Esophagus squamous epithelium (tissue), 5 donors: ENCODE measurements at regions of chr7 and their contacts with region 1.

Region 1: GRCh38 chr7:64183126-64183742 is 23.8 kb upstream of the ZNF735 start:
- DNase-seq: no peak
- H3K4me3 ChIP-seq: no peak overlapping the region
- H3K27ac ChIP-seq: no peak overlapping the region
- H3K4me1 ChIP-seq: no peaks in the 10 kb centered on the region
- H3K27me3 ChIP-seq: peaks cover 0 to 20% (median 0%) of the 10 kb centered on the region in 4 donors
- CTCF ChIP-seq: peak; percentile 33 to 73 (median 52)
- POLR2A ChIP-seq: no peak

Region 2: DNA sequence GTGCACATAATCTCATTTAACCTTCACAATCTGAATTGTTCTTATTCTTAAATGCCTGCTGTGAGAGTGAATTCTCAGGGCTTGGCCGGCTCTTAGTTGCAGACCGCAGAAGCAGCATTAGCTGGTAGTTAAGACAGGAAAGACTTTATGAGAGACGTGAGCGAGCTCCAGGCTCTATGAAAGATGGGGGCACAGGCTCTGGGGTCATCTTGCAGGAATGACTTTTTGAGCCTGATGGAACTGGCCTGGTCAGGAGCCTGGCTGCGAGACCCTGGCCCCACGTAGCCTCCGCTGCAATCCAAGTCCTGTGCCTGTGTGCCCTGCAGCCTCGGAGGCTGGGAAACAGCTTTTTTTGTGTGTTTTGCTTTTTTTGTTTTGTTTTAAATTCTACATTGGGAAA is 1143.4 kb before region 1 on chr7:
- intact Hi-C with region 1: no loop called
- DNase-seq: no peak
- H3K4me3 ChIP-seq: no peak overlapping the region
- H3K27ac ChIP-seq: no peak overlapping the region
- H3K4me1 ChIP-seq: no peaks in the 10 kb centered on the region
- H3K27me3 ChIP-seq: no peaks in the 10 kb centered on the region
- CTCF ChIP-seq: no peak
- POLR2A ChIP-seq: no peak

Region 3: DNA sequence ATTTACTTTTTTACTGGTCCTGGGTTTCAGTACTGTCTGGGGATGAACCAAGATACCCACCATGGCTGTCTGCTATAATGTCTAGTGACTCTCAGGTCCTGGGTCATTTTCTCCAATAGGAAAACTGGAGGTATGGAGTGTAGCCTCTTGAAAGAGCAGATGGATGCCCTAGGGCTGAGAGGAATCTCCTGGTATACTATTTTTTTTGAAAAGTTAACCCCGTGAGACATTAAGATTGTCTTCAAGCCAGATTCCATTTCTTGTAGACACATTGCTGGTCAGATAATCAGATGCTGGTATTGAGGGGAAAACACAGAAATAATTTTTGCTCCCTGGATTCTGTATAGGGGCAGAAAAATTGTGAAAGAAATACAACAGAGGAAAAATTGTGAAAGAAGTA is 282.3 kb after region 1 on chr7:
- intact Hi-C with region 1: no loop called
- DNase-seq: no peak
- H3K4me3 ChIP-seq: no peak overlapping the region
- H3K27ac ChIP-seq: no peak overlapping the region
- H3K4me1 ChIP-seq: no peaks in the 10 kb centered on the region
- H3K27me3 ChIP-seq: no peaks in the 10 kb centered on the region
- CTCF ChIP-seq: no peak
- POLR2A ChIP-seq: no peak

Region 4: GRCh38 chr7:64618785-64619456 is 435.7 kb after region 1 on chr7:
- intact Hi-C with region 1: loop called (anchors 10 kb)
- DNase-seq: no peak
- H3K4me3 ChIP-seq: no peak overlapping the region
- H3K27ac ChIP-seq: no peak overlapping the region
- H3K4me1 ChIP-seq: no peaks in the 10 kb centered on the region
- H3K27me3 ChIP-seq: no peaks in the 10 kb centered on the region
- CTCF ChIP-seq: peak in 5 of 6 experiments; percentile 36 to 68 (median 51)
- POLR2A ChIP-seq: no peak